ENCODE measurements at regions of chr12 and their contacts with region 1.

Region 1: GRCh38 chr12:84937415-84937814 is 24.8 kb upstream of the SLC6A15 start:
- H3K4me3 Mint-ChIP-seq: no peak overlapping the region
- H3K27ac Mint-ChIP-seq: no peak overlapping the region
- H3K4me1 Mint-ChIP-seq: no peaks in the 10 kb centered on the region
- H3K27me3 Mint-ChIP-seq: no peaks in the 10 kb centered on the region

Region 2: DNA sequence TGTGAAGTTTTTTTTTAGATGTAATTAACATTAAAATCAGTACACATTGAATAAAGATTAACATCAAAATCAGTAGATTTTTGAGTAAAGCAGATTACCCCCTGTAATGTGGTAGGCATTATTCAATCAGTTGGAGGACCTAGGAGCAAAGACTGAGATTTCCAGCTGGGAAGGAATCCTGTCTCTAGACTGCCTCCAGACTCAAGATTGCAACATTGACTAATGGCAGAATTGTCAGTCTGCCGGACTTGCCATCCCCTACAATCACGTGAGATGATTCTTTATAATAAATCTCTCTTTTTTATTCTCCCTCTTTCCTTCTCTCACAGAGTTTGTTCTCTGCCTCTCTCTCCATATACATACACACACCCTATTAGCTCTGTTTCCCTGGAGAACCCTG is 26.6 kb after region 1 on chr12:
- intact Hi-C with region 1: loop called (anchors 2 kb)
- H3K4me3 Mint-ChIP-seq: no peak overlapping the region
- H3K27ac Mint-ChIP-seq: no peak overlapping the region
- H3K4me1 Mint-ChIP-seq: no peaks in the 10 kb centered on the region
- H3K27me3 Mint-ChIP-seq: no peaks in the 10 kb centered on the region